Psoas muscle (tissue), 8 donors: ENCODE measurements at regions of chr6 and their contacts with region 1.

Region 1: DNA sequence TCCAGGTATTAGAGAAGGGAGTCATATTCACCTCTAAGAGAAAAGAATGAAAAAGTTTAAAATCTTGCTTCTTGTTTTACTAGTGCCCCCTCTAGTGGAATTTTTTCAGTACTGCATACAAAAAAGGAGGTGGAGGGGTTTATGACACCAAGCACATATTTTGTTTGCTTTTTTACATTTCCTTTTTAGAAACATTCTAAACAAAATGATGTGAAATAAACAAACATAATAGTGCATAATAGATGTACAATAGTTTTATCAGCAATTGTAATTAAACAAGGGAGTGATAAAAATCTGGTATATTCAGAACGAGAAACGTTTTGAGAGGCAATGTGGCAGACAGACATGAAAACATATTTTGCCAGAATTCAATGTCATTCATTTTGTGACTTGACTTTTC is 111.0 kb upstream of the TFAP2D start:
- DNase-seq: no peak
- ATAC-seq: no peak
- H3K4me3 ChIP-seq: no peak overlapping the region
- H3K27ac ChIP-seq: no peak overlapping the region
- H3K4me1 ChIP-seq: no peaks in the 10 kb centered on the region
- H3K27me3 ChIP-seq: no peaks in the 10 kb centered on the region
- CTCF ChIP-seq: peak; percentile 73

Region 2: GRCh38 chr6:50128420-50129005 is 473.8 kb before region 1 on chr6:
- intact Hi-C with region 1: loop called (anchors 5 kb)
- DNase-seq: no peak
- ATAC-seq: no peak
- H3K4me3 ChIP-seq: no peak overlapping the region
- H3K27ac ChIP-seq: no peak overlapping the region
- H3K4me1 ChIP-seq: no peaks in the 10 kb centered on the region
- H3K27me3 ChIP-seq: no peaks in the 10 kb centered on the region
- CTCF ChIP-seq: peak; percentile 53